PC-3 (cell line): ENCODE measurements at regions of chr2 and their contacts with region 1.

Region 1: DNA sequence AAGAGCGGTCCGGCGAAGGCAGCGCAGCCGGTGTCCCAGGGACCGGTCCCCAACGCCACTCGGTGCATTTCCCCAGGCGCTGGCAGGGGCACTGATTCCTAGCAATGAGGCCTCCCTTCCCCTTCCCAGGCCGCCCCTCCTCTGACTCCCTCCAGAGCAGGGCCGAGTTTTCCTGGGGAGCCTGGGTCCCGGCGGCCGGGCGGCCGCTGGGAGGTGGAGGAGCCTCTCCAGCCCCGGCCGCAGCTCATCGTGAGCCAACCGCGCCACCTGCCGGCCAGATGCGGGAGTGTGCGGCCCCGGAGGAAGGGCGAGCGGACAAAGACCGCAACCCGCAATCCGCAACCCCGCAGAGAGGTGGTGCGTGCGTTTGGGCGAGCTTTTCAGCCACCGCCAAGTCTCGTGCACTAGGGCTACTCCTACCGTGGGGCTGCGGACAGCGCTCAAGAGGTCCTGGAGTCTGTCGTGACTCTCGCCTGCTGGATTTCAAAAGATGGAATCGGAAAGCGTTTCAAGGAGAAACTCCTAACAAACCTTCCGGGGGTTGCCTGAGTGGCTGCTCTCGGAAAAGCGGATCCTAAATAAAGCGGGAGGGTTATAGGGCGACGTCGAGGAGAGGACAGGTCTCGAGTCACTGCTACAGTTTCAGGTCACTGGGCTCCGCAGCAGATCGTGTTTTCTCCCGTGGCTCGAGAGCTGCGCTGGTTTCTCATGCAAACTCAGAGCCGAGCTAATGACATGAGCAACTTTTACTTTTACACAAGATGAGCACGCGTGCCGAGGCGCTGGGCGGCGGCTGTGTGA is 1.5 kb upstream of the EPHA4 start:
- DNase-seq: peak; percentile 76
- ATAC-seq: peak; percentile 70
- H3K4me3 ChIP-seq: peak overlapping the region; percentile 96
- H3K27ac ChIP-seq: no peak overlapping the region
- H3K4me1 ChIP-seq: peaks cover 11% of the 10 kb centered on the region; the same call in 1 of the 2 replicates
- H3K27me3 ChIP-seq: peaks cover 32% of the 10 kb centered on the region
- CTCF ChIP-seq: peak; percentile 88

Region 2: GRCh38 chr2:220165401-220165800 is 1408.2 kb before region 1 on chr2:
- CTCF ChIA-PET with region 1: no interaction called
- POLR2A ChIA-PET with region 1: no interaction called
- intact Hi-C with region 1: loop called (anchors 2 kb)
- DNase-seq: peak; percentile 58
- ATAC-seq: peak; percentile 51
- H3K4me3 ChIP-seq: no peak overlapping the region
- H3K27ac ChIP-seq: no peak overlapping the region
- H3K4me1 ChIP-seq: peaks cover 12% of the 10 kb centered on the region
- H3K27me3 ChIP-seq: no peaks in the 10 kb centered on the region
- CTCF ChIP-seq: peak; percentile 47

Region 3: GRCh38 chr2:220334210-220334609 is 1239.4 kb before region 1 on chr2:
- CTCF ChIA-PET with region 1: no interaction called
- POLR2A ChIA-PET with region 1: no interaction called
- intact Hi-C with region 1: loop called (anchors 5 kb)
- DNase-seq: peak; percentile 96
- ATAC-seq: peak; percentile 89
- H3K4me3 ChIP-seq: no peak overlapping the region
- H3K27ac ChIP-seq: peak overlapping the region; percentile 86
- H3K4me1 ChIP-seq: peaks cover 30% of the 10 kb centered on the region
- H3K27me3 ChIP-seq: no peaks in the 10 kb centered on the region
- CTCF ChIP-seq: no peak

Region 4: DNA sequence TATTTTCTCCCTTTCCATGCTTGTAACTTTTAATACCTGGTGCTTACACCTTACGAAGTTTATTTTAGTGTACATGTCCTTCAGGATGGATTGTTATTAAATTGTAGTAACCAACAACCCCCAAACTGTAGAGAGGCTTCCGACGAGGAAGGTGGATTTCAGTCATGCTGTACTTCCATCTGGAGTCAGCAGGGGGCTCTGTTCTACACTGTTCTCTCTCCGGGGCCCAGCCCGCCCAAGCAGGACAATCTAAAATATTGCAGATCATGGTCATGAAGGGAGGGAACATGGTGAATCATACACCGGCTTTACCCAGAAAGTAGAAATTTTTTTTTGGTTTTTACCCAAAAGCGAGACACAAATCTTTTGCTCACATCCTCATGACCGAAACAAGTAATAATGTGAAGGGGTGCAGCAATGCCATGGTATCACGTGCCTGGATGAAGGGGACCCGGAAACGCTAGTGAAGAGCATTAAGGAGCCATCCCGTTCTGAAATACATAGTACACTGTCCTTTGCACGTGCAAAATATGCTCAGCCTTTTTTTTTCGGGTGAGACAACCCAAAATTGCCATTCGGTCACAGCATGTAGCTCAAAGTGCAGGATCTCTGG is 886.3 kb before region 1 on chr2:
- CTCF ChIA-PET with region 1: no interaction called
- POLR2A ChIA-PET with region 1: no interaction called
- intact Hi-C with region 1: loop called (anchors 1 kb)
- DNase-seq: peak; percentile 84
- ATAC-seq: peak; percentile 79
- H3K4me3 ChIP-seq: no peak overlapping the region
- H3K27ac ChIP-seq: no peak overlapping the region
- H3K4me1 ChIP-seq: peaks cover 5% of the 10 kb centered on the region; the same call in 1 of the 2 replicates
- H3K27me3 ChIP-seq: no peaks in the 10 kb centered on the region
- CTCF ChIP-seq: peak; percentile 95

Region 5: GRCh38 chr2:221104361-221104811 is 469.2 kb before region 1 on chr2:
- CTCF ChIA-PET with region 1: no interaction called
- POLR2A ChIA-PET with region 1: no interaction called
- intact Hi-C with region 1: loop called (anchors 10 kb)
- DNase-seq: no peak
- ATAC-seq: no peak
- H3K4me3 ChIP-seq: no peak overlapping the region
- H3K27ac ChIP-seq: no peak overlapping the region
- H3K4me1 ChIP-seq: no peaks in the 10 kb centered on the region
- H3K27me3 ChIP-seq: peaks cover 9% of the 10 kb centered on the region; the same call in 1 of the 2 replicates
- CTCF ChIP-seq: no peak

Region 6: DNA sequence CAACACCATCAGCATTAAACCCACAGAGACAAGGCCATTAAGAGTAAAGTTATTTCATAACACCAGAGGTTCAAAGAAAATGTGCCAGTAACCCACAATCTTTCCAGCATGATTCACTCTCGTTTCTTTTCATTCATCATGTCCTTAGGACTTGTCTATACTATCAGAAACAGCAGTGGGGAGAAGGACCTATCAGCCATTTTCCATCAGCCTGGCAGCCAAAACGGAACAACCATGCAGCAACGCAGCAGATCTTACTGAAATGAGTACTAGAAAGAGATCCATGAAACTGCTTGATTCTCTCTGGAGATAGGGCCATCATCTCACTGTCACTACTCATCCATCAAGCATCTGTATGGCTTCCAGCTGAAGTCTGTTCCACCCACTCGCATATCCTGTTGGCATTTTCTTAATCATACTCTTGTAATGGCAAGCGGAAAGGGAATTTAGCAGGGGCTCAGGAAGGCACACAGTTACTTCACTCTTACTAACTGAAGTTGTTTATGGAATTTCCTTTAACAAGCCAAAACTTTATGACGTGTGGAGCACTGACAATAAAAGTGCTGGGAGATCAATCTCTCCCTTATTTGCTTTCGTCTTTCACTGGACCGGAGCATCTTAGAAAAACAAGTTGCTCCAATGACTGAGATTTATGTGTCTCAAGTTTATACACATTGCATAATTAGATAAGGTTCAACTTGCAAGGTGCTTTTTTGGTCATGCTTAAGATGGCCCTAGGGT is 71.2 kb before region 1 on chr2:
- CTCF ChIA-PET with region 1: no interaction called
- POLR2A ChIA-PET with region 1: no interaction called
- intact Hi-C with region 1: no loop called
- DNase-seq: peak; percentile 22
- ATAC-seq: peak; percentile 57
- H3K4me3 ChIP-seq: no peak overlapping the region
- H3K27ac ChIP-seq: no peak overlapping the region
- H3K4me1 ChIP-seq: no peaks in the 10 kb centered on the region
- H3K27me3 ChIP-seq: no peaks in the 10 kb centered on the region
- CTCF ChIP-seq: no peak

Region 7: GRCh38 chr2:221517696-221518151 is 55.9 kb before region 1 on chr2:
- CTCF ChIA-PET with region 1: no interaction called
- POLR2A ChIA-PET with region 1: no interaction called
- intact Hi-C with region 1: loop called (anchors 5 kb)
- DNase-seq: peak; percentile 91
- ATAC-seq: peak; percentile 88
- H3K4me3 ChIP-seq: peak overlapping the region; percentile 53; the same call in 1 of the 2 replicates
- H3K27ac ChIP-seq: peak overlapping the region; percentile 93
- H3K4me1 ChIP-seq: peaks cover 38% of the 10 kb centered on the region
- H3K27me3 ChIP-seq: no peaks in the 10 kb centered on the region
- CTCF ChIP-seq: no peak

Region 8: DNA sequence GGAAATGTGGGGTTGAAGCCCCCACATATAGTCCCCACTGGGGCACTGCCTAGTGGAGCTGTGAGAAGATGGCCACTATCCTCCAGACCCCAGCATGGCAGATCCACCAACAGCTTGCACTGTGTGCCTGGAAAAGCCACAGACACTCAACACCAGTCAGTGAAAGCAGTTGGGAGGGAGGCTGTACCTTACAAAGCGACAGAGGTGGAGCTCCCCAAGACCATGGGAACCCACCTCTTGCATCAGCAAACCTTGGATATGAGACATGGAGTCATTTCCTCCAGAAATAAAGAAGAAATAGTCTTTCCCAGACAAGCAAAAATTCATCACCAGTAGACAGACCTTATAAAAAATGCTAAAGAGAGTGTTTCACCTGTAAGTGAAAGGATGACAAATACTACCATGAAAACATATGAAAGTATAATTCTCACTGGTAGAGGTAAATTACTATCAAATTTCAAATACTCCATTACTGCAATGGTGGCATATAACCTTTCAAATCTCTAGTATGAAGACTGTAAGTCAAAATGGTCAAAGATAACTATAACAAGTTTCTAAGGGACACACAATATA is 151.1 kb after region 1 on chr2:
- CTCF ChIA-PET with region 1: no interaction called
- POLR2A ChIA-PET with region 1: no interaction called
- intact Hi-C with region 1: loop called (anchors 2 kb)
- DNase-seq: no peak
- ATAC-seq: no peak
- H3K4me3 ChIP-seq: no peak overlapping the region
- H3K27ac ChIP-seq: no peak overlapping the region
- H3K4me1 ChIP-seq: no peaks in the 10 kb centered on the region
- H3K27me3 ChIP-seq: no peaks in the 10 kb centered on the region
- CTCF ChIP-seq: no peak